ENCODE measurements at regions of chr12 and their contacts with region 1.

Region 1: GRCh38 chr12:106357549-106358395 is at the start of gene POLR3B:
- DNase-seq: peak; percentile 94
- H3K4me3 Mint-ChIP-seq: peak within 1 kb of the TSS; percentile 86
- H3K27ac Mint-ChIP-seq: peak within 1 kb of the TSS; percentile 94
- H3K4me1 Mint-ChIP-seq: peaks cover 13% of the 10 kb centered on the region
- H3K27me3 Mint-ChIP-seq: no peaks in the 10 kb centered on the region
- CTCF ChIP-seq: peak; percentile 72
- total RNA-seq, gene POLR3B: 11.1 and 15.7 TPM in 2 replicates

Region 2: DNA sequence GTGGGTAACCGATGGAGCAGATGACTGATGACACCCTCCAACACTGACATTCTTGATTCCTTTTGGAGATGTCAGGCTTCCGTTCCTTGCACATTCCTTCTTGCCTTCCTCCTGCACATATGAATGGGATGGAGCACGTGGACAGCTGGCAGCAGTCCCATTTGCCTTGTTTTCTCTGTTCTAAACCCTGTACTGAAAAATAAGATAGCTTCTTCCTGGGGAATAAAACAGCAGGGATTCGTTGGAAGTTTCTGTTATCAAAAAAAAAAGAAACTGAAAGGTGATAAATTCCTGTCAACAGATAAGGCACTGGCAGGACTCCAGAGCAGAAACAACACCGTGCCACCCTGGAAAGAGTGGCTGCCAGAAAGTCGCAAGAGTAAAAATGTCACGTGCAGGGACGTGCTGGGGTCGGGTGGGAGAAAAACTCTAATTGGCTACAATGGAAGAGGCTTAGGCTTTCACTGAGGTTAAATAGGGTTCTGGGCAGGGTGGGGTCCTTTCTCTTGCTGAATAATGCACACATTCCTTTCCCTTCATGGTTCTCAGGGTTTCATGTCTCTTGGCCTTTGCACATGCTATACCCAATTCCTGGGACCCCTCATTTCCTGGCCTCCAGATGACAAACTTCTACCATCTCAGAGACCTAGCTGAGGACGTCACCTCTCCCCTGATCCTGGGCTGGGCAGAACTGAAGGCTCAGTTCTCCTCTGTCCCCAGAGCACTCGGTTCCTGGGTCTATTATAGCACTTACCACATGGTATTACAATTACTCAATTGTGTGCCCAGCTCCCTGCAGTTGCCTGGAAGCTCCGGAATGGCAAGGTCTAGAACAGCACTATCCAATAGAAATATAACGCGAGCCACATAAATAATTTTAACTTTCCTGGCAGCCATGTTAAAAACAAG is 212.0 kb before region 1 on chr12:
- CTCF ChIA-PET with region 1: no interaction called
- POLR2A ChIA-PET with region 1: no interaction called
- intact Hi-C with region 1: no loop called
- DNase-seq: no peak
- H3K4me3 Mint-ChIP-seq: no peak overlapping the region
- H3K27ac Mint-ChIP-seq: no peak overlapping the region
- H3K4me1 Mint-ChIP-seq: peaks cover 5% of the 10 kb centered on the region
- H3K27me3 Mint-ChIP-seq: no peaks in the 10 kb centered on the region
- CTCF ChIP-seq: no peak

Region 3: DNA sequence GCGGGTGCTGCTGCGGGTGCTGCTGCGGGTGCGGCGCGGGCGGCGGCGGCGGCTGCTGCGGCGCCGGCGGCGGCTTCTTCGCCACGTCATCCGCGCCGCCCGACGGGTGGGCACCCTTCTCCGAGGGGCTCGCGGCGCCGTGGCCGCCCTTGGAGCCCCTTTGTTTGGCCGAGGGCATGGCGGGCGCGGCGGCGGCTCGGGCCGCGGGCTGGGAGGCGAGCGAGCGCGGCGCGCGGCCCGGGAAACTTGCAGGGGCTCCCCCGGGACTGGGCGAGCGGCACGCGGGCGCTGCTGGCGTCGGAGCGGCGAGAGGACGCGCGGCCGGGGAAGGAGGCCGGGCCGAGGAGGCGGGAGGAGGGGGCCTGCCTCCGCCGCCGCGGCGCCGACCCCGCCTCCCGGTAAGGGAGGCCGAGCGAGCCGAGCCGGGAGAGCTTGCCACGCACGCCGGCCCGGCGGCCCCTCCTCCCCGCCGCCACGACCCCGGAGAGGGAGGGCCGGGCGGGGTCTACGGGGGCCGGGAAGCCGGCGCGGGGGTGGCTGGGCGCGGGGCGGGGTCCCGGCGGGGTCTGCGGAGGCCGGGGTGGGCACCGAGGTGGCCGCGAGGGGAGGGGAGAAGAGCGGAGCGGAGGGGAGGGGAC is 110.0 kb before region 1 on chr12 and contains the start of gene CKAP4:
- CTCF ChIA-PET with region 1: interaction called, 3 read pairs
- POLR2A ChIA-PET with region 1: interaction called, 29 read pairs
- intact Hi-C with region 1: no loop called
- DNase-seq: peak; percentile 72
- H3K4me3 Mint-ChIP-seq: peak within 1 kb of the TSS; percentile 76
- H3K27ac Mint-ChIP-seq: peak within 1 kb of the TSS; percentile 23
- H3K4me1 Mint-ChIP-seq: peaks cover 23% of the 10 kb centered on the region
- H3K27me3 Mint-ChIP-seq: no peaks in the 10 kb centered on the region
- CTCF ChIP-seq: no peak
- total RNA-seq, gene CKAP4: 101 and 118 TPM in 2 replicates

Region 4: GRCh38 chr12:106302401-106303201 is 55.2 kb before region 1 on chr12 and contains the start of gene TCP11L2:
- CTCF ChIA-PET with region 1: interaction called, 20 read pairs
- POLR2A ChIA-PET with region 1: interaction called, 46 read pairs
- intact Hi-C with region 1: no loop called
- DNase-seq: peak; percentile 79
- H3K4me3 Mint-ChIP-seq: peak within 1 kb of the TSS; percentile 89
- H3K27ac Mint-ChIP-seq: peak within 1 kb of the TSS; percentile 100
- H3K4me1 Mint-ChIP-seq: peaks cover 23% of the 10 kb centered on the region
- H3K27me3 Mint-ChIP-seq: no peaks in the 10 kb centered on the region
- CTCF ChIP-seq: no peak
- total RNA-seq, gene TCP11L2: 10.2 and 11.4 TPM in 2 replicates

Region 5: GRCh38 chr12:106345739-106346138 is 12.0 kb before region 1 on chr12:
- CTCF ChIA-PET with region 1: interaction called, 54 read pairs
- POLR2A ChIA-PET with region 1: interaction called, 33 read pairs
- intact Hi-C with region 1: no loop called
- DNase-seq: peak; percentile 85
- H3K4me3 Mint-ChIP-seq: peak overlapping the region; percentile 44
- H3K27ac Mint-ChIP-seq: peak overlapping the region; percentile 83
- H3K4me1 Mint-ChIP-seq: peaks cover 22% of the 10 kb centered on the region
- H3K27me3 Mint-ChIP-seq: no peaks in the 10 kb centered on the region
- CTCF ChIP-seq: peak; percentile 60

Region 6: DNA sequence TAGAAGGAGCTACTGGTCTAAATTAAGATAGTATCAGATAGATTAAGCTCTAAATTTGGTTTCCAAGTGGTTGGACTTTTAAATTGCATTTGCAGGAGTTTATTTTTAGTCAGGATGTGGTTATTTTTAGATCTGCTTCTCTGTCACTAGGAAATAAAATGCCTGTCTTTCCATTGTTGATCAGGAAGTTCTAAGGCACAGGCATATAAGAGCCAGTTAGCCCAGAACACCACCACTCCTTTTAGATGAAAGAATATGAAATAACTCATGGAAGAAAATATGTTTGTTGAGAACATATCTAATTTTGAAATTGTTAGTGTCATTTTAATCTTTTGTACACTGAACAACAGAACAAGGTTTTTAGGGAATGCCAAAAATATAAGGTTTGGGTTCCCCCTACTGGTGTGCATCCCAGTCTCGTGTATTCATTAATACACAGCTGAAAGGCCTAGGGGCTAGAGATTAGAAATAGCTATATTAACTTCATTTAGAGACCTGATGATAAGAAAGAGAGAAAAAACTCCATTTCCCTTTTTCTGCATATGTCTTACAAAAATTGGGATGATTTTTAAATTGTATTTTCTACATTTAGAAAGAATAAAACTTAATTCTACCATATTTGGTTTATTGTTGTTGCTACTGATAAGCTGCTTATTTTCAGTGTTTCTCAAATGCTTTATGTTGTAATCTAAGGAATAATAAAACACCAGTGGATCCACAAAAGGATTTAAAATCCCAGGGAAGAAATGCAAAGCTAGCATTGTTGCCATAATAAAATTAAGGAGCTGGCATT is 483.9 kb after region 1 on chr12:
- CTCF ChIA-PET with region 1: interaction called, 7 read pairs
- POLR2A ChIA-PET with region 1: interaction called, 3 read pairs
- intact Hi-C with region 1: loop called (anchors 1 kb)
- DNase-seq: peak; percentile 58
- H3K4me3 Mint-ChIP-seq: no peak overlapping the region
- H3K27ac Mint-ChIP-seq: no peak overlapping the region
- H3K4me1 Mint-ChIP-seq: no peaks in the 10 kb centered on the region
- H3K27me3 Mint-ChIP-seq: no peaks in the 10 kb centered on the region
- CTCF ChIP-seq: peak; percentile 57

Region 7: DNA sequence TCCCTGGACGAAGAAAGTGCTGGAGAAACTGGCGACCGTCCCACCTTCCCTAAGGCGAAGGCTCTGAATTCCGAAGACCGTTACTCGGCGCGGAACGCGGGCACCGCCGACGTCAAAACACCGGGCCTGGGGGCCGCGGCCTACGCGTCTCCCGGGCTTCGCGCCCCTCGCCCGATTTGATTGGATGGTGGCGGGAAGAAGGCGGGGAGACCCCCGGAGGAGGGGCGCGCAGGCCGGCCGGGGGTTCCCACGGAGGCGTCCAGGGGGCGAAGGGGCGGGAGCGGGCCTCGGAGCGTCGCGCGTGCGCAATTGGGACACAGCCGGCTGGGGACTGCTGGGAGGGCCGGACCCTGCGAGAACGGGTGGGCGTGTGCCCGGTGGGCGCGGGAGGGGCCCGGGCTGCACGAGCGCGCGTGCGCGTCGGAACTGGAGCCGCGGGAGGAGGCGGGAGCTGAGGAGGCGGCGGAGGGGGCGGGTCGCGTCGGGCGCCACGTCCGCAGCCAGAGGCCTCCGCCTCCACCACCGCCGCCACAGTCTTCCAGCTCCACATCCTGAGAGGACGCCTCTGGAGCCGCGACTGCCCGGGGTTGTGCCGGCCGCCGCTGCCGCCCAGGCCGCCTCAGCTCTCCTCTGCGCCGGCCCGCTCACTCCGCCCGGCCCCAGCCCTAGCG is 597.7 kb after region 1 on chr12 and contains the start of gene TMEM263:
- CTCF ChIA-PET with region 1: no interaction called
- POLR2A ChIA-PET with region 1: interaction called, 13 read pairs
- intact Hi-C with region 1: no loop called
- DNase-seq: peak; percentile 86
- H3K4me3 Mint-ChIP-seq: peak within 1 kb of the TSS; percentile 95
- H3K27ac Mint-ChIP-seq: peak within 1 kb of the TSS; percentile 95
- H3K4me1 Mint-ChIP-seq: peaks cover 9% of the 10 kb centered on the region
- H3K27me3 Mint-ChIP-seq: no peaks in the 10 kb centered on the region
- CTCF ChIP-seq: no peak
- total RNA-seq, gene TMEM263: 60.1 and 68.4 TPM in 2 replicates

Measured in MCF 10A (cell line).